ENCODE measurements at regions of chr10 and their contacts with region 1.

Region 1: GRCh38 chr10:62816331-62817120 is at the start of gene EGR2:
- DNase-seq: peak; percentile 95
- ATAC-seq: peak; percentile 90
- total RNA-seq, gene EGR2: 0.19 TPM

Region 2: DNA sequence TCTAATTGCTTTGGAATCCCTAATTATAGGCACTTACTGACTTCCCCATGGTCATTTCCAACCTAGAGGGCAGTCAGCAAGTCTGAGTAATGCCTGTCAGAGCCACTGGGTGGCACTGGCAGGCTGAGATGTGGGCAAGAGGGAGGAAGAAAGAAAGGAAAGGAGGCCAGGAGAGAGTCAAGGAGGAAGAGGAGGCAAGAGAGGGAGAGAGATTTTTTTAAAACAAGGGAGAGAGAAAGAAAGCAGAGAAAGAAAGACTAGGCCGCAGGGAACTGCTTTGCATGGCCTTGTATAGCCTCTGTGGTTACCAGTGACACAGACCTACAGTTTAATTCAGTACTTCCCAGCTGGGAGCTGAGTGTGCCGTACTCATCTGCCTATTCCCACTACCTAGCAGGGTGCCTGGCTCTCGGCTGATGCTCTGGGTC is 222.4 kb before region 1 on chr10:
- intact Hi-C with region 1: loop called (anchors 5 kb)
- DNase-seq: peak; percentile 74
- ATAC-seq: peak; percentile 92

Region 3: GRCh38 chr10:62610649-62611229 is 205.8 kb before region 1 on chr10:
- intact Hi-C with region 1: loop called (anchors 5 kb)
- DNase-seq: peak; percentile 62
- ATAC-seq: peak; percentile 80

Region 4: DNA sequence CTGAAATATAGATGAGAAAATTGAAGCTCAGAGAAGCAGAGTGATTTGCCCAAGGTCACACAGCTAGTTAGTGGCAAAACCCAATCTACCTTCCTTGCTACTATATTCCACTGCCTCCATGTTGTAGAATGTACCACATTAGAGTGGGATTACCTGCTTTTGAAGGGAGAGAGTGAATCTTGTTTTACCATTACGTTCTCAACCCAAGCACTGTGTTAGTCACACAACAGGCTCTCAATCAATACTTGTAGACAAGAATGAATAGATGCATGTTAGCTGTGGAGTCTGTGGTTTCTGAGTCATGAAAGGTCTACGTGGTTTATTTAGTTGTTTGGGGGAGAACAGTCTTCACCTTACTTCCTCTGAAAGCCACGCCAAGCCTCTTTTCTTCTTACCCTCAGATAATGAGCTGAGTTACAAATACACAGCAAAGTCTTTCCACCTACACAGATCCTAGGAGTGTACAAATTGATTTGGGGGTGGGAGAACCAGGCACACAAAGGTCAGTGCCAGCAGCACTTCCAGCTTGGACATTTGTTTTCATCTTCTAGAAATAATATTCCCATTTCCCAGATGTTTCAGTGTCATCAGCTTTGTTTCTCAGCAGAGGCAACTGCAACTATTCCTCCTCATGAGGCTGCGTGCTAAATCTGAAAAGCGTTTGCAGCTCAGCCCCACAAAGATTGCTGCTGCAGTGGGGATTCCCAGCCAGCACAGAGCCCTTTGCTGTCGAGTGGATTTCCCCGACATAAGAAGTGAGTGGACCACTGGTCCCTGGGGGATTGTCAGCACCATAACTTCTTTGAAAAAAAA is 83.5 kb before region 1 on chr10:
- intact Hi-C with region 1: loop called (anchors 10 kb)
- DNase-seq: no peak
- ATAC-seq: no peak

Region 5: GRCh38 chr10:63145782-63146181 is 329.3 kb after region 1 on chr10:
- intact Hi-C with region 1: loop called (anchors 10 kb)
- DNase-seq: no peak
- ATAC-seq: no peak

Measured in Right ventricle myocardium superior (tissue), 1 donor.